ENCODE measurements at regions of chr17 and their contacts with region 1.

Region 1: GRCh38 chr17:56629531-56630075 is 36.1 kb downstream of the NOG start:
- DNase-seq: peak; percentile 29 to 50
- H3K4me3 ChIP-seq: no peak overlapping the region
- H3K27ac ChIP-seq: no peak overlapping the region
- H3K4me1 ChIP-seq: peaks cover 0 to under 1% (median 0%) of the 10 kb centered on the region in 4 experiments; a peak in 1 of 7 replicates
- H3K27me3 ChIP-seq: no peaks in the 10 kb centered on the region
- CTCF ChIP-seq: peak; percentile 69 to 78 (median 72)
- EP300 ChIP-seq: no peak
- POLR2A ChIP-seq: no peak
- RAD21 ChIP-seq: peak; percentile 33 to 40; a peak in 3 of 4 replicates

Region 2: GRCh38 chr17:56269556-56270389 is 359.8 kb before region 1 on chr17:
- CTCF ChIA-PET with region 1: no interaction called
- POLR2A ChIA-PET with region 1: no interaction called
- DNase-seq: no peak
- H3K4me3 ChIP-seq: no peak overlapping the region
- H3K27ac ChIP-seq: no peak overlapping the region
- H3K4me1 ChIP-seq: no peaks in the 10 kb centered on the region
- H3K27me3 ChIP-seq: no peaks in the 10 kb centered on the region
- CTCF ChIP-seq: no peak
- EP300 ChIP-seq: no peak
- POLR2A ChIP-seq: no peak
- RAD21 ChIP-seq: no peak

Region 3: GRCh38 chr17:56536766-56537165 is 92.8 kb before region 1 on chr17:
- CTCF ChIA-PET with region 1: no interaction called
- POLR2A ChIA-PET with region 1: no interaction called
- DNase-seq: no peak
- H3K4me3 ChIP-seq: no peak overlapping the region
- H3K27ac ChIP-seq: no peak overlapping the region
- H3K4me1 ChIP-seq: no peaks in the 10 kb centered on the region
- H3K27me3 ChIP-seq: no peaks in the 10 kb centered on the region; a peak in 1 of 7 replicates
- CTCF ChIP-seq: no peak
- EP300 ChIP-seq: no peak
- POLR2A ChIP-seq: no peak
- RAD21 ChIP-seq: no peak

Region 4: DNA sequence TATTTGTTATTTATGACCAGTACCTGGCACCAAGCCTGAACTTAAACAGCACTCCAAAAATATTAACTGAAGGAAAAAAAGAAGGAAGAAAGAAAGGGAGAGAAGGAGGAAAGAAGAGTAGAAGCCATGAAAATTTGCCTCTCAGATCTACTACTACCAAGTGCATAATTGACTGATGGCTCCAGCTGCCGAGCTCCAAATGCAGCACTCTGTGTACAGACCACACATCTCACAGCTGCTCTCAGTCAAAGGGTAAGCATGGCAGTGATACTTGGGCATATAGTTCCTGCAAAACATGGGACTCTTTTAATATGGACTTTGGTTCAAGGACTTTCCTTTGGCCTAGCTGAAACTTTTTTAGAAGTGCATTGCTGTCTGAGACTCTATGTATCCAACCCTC is 80.1 kb before region 1 on chr17:
- CTCF ChIA-PET with region 1: no interaction called
- POLR2A ChIA-PET with region 1: no interaction called
- DNase-seq: no peak
- H3K4me3 ChIP-seq: no peak overlapping the region
- H3K27ac ChIP-seq: no peak overlapping the region
- H3K4me1 ChIP-seq: peaks cover 2 to 7% (median 2%) of the 10 kb centered on the region in 4 experiments; a peak in 5 of 7 replicates
- H3K27me3 ChIP-seq: no peaks in the 10 kb centered on the region
- CTCF ChIP-seq: no peak
- EP300 ChIP-seq: no peak
- POLR2A ChIP-seq: no peak
- RAD21 ChIP-seq: no peak

Region 5: GRCh38 chr17:56570199-56570598 is 59.4 kb before region 1 on chr17:
- CTCF ChIA-PET with region 1: no interaction called
- POLR2A ChIA-PET with region 1: no interaction called
- DNase-seq: no peak
- H3K4me3 ChIP-seq: no peak overlapping the region
- H3K27ac ChIP-seq: no peak overlapping the region
- H3K4me1 ChIP-seq: no peaks in the 10 kb centered on the region
- H3K27me3 ChIP-seq: no peaks in the 10 kb centered on the region
- CTCF ChIP-seq: no peak
- EP300 ChIP-seq: no peak
- POLR2A ChIP-seq: no peak
- RAD21 ChIP-seq: no peak

Region 6: GRCh38 chr17:56598466-56599148 is 31.0 kb before region 1 on chr17:
- CTCF ChIA-PET with region 1: interaction called, 12 read pairs
- POLR2A ChIA-PET with region 1: interaction called, 3 read pairs
- DNase-seq: no peak
- H3K4me3 ChIP-seq: no peak overlapping the region
- H3K27ac ChIP-seq: no peak overlapping the region
- H3K4me1 ChIP-seq: peaks cover 0 to 8% (median 4%) of the 10 kb centered on the region in 4 experiments; a peak in 5 of 7 replicates
- H3K27me3 ChIP-seq: peaks cover 8 to 50% (median 40%) of the 10 kb centered on the region in 4 experiments
- CTCF ChIP-seq: no peak
- EP300 ChIP-seq: no peak
- POLR2A ChIP-seq: no peak
- RAD21 ChIP-seq: no peak

Region 7: GRCh38 chr17:56604691-56605290 is 24.8 kb before region 1 on chr17:
- CTCF ChIA-PET with region 1: interaction called, 16 read pairs
- POLR2A ChIA-PET with region 1: no interaction called
- DNase-seq: no peak
- H3K4me3 ChIP-seq: no peak overlapping the region
- H3K27ac ChIP-seq: no peak overlapping the region
- H3K4me1 ChIP-seq: no peaks in the 10 kb centered on the region
- H3K27me3 ChIP-seq: no peaks in the 10 kb centered on the region
- CTCF ChIP-seq: no peak
- EP300 ChIP-seq: no peak
- POLR2A ChIP-seq: no peak
- RAD21 ChIP-seq: no peak

Measured in H1 (cell line).